Activated CD8-positive, alpha-beta memory T cell treated with anti-CD3 and anti-CD28 coated beads, Interleukin-2, amount 10 ng/mL, durations not matched to agents 7 days and 5 days (primary cell): ENCODE measurements at regions of chr20 and their contacts with region 1.

Region 1: DNA sequence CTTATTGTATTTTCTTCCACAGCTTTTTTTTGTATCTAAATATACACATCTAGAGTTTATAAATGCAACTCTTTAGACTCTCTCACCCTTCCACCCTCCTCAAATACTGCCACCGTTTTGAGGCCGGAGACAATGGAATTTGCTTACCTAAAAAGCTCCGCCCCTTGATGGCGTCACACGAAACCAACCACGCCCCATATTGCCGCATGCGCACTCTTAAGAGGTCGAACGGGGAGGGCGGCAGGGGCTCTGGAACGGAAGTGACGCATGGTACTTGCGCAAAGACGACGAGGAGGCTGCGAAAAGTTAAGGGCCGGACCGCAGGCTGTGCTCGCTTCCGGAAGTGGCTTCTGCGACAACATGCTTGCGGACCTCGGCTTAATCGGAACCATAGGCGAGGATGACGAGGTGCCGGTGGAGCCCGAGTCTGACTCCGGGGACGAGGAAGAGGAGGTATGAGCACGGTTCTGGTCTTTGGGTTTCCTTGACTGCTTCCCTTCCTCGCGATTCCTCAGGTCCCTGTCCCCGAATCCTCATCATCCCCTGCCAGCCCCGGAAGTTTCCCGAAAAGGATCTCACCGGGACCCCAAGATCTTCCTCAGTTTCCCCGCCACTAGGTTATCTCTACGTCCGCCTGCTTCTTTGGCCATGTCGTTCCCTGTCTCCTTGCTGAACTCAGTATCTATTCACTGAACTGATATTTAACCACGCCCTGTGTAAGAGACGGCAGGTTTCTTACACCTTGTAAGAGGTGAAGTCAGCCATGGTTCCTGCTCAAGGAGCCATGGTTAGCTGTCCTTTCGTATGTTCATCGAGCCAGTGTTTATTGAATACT is at the start of gene DDX27:
- DNase-seq: peak; percentile 99
- ATAC-seq: peak; percentile 94
- H3K4me3 Mint-ChIP-seq: peak within 1 kb of the TSS; percentile 89
- H3K27ac Mint-ChIP-seq: peak within 1 kb of the TSS; percentile 93
- H3K4me1 Mint-ChIP-seq: peaks cover 26% of the 10 kb centered on the region
- H3K27me3 Mint-ChIP-seq: no peaks in the 10 kb centered on the region
- total RNA-seq, gene DDX27: 40.5 to 52.7 TPM

Region 2: DNA sequence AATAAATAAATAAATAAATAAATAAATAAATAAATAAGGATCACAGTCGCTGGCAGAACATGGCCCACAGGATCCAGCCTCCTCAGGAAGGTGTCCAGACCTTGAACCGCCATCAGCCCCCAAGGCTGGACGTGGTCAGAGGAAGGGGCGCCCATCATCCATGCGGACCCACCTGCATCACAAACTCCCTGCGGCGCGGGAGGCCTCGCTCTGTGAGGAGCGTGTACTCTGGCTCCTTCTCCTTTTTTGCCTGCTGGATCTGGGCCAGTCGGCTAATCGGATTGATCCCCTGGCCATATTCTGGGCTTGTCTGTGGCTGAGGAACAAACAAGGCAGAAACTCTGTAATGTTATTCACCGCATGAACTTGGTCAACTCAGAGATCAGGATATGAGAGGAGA is 96.4 kb before region 1 on chr20:
- CTCF ChIA-PET with region 1: interaction called, 15 read pairs
- DNase-seq: no peak
- ATAC-seq: no peak
- H3K4me3 Mint-ChIP-seq: no peak overlapping the region
- H3K27ac Mint-ChIP-seq: no peak overlapping the region
- H3K4me1 Mint-ChIP-seq: peaks cover 2% of the 10 kb centered on the region
- H3K27me3 Mint-ChIP-seq: no peaks in the 10 kb centered on the region

Region 3: DNA sequence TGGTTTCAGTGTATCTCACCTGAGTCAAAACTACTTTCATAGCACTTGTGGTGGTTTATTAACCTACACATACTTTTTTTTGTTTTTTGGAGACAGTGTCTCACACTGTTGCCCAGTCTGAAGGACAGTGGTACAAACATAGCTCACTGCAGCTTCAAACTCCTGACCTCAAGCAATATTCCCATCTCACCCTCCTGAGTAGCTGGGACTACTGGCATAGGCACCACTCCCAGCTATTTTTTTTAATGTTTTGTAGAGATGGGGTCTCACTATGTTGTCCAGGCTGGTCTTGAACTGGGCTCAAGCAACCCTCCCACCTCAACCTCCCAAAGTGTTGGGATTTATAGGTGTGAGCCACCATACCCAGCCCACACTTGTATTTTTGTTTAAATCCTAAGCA is 80.9 kb before region 1 on chr20:
- CTCF ChIA-PET with region 1: interaction called, 161 read pairs
- DNase-seq: no peak
- ATAC-seq: no peak
- H3K4me3 Mint-ChIP-seq: no peak overlapping the region
- H3K27ac Mint-ChIP-seq: no peak overlapping the region
- H3K4me1 Mint-ChIP-seq: peaks cover 9% of the 10 kb centered on the region
- H3K27me3 Mint-ChIP-seq: no peaks in the 10 kb centered on the region

Region 4: GRCh38 chr20:49166534-49167449 is 52.5 kb before region 1 on chr20:
- CTCF ChIA-PET with region 1: interaction called, 27 read pairs
- DNase-seq: no peak
- ATAC-seq: peak; percentile 94
- H3K4me3 Mint-ChIP-seq: peak overlapping the region; percentile 58
- H3K27ac Mint-ChIP-seq: peak overlapping the region; percentile 87
- H3K4me1 Mint-ChIP-seq: peaks cover 49% of the 10 kb centered on the region
- H3K27me3 Mint-ChIP-seq: no peaks in the 10 kb centered on the region

Region 5: DNA sequence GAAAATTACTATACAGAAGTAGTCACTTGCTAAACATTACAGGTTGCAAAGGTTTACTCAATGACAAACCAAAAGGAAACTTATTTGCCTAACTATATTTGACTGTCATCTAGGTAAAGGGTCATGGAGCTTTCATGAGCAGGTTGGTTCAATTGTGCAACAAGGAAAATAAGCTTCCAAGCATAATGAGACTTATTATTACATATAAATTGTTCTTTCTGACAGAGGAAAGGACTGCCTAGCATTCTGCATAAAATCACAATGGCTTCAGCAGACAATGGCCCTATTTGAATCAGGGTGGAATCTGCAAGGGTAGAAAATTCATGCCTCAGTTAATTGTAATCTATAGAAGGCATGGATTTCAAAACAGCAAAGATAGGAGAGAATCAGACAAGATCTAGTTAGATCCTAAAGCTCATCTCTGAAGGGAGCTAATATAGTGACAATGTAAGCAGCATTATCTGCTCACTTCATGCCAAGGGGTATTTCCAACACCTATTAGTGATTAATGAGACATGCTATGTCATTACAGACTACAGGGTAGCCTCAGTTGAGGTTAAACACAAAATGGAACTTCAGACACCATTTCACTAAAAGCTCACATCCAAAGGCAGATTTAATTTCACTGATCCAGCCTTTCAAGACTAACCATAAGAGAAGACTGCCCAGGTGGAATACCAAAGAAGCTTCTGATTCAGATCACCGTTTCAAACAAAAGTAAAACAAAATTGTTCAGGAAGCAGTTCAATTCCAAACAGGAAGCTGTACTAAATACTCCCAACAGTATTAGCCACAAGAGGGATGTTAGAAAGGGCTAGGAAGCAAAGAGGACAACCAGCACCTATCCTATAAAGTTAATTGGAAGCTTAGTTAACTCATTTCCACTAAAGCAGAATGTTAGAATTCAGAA is 39.7 kb before region 1 on chr20:
- CTCF ChIA-PET with region 1: interaction called, 17 read pairs
- DNase-seq: no peak
- ATAC-seq: no peak
- H3K4me3 Mint-ChIP-seq: no peak overlapping the region
- H3K27ac Mint-ChIP-seq: no peak overlapping the region
- H3K4me1 Mint-ChIP-seq: peaks cover 42% of the 10 kb centered on the region
- H3K27me3 Mint-ChIP-seq: no peaks in the 10 kb centered on the region

Region 6: DNA sequence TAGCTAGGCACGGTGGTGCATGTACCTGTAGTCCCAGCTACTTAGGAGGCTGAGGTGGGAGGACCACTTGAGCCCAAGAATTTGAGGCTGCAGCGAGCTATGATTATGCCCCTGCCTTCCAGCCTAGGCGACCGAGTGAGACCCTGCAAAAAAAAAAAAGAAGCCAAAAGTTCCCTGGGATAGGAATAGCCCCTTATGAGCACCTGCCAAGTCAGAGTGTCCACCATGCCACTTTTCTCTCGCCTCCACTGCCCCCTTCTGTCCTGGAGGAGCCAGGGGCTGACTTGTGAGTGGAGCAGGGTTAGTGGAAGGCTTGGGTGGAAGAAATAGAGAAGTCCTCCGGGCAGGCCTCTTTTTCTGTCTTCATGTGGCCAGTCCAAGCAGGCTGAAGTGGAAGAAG is 12.2 kb before region 1 on chr20:
- CTCF ChIA-PET with region 1: interaction called, 20 read pairs
- DNase-seq: no peak
- ATAC-seq: no peak
- H3K4me3 Mint-ChIP-seq: no peak overlapping the region
- H3K27ac Mint-ChIP-seq: no peak overlapping the region
- H3K4me1 Mint-ChIP-seq: no peaks in the 10 kb centered on the region
- H3K27me3 Mint-ChIP-seq: peaks cover 2% of the 10 kb centered on the region

Region 7: DNA sequence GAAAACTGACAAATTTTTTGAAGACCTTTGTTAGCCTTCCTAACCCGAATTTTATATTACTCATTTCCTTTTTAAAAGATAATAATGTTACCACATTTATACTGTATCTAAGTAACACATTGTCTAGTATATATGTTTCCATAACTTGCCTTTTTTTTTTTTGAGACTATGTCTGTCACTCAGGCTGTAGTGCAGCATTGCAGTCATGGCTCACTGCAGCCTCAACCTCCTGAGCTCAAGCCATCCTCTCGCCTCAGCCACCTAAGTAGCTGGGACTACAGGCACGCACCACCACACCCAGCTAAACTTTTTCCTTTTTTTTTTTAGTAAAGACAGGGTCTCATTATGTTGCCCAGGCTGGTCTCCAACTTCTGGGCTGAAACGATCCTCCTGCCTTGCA is 40.0 kb after region 1 on chr20:
- CTCF ChIA-PET with region 1: no interaction called
- DNase-seq: no peak
- ATAC-seq: no peak
- H3K4me3 Mint-ChIP-seq: no peak overlapping the region
- H3K27ac Mint-ChIP-seq: no peak overlapping the region
- H3K4me1 Mint-ChIP-seq: peaks cover 18% of the 10 kb centered on the region
- H3K27me3 Mint-ChIP-seq: no peaks in the 10 kb centered on the region

Region 8: DNA sequence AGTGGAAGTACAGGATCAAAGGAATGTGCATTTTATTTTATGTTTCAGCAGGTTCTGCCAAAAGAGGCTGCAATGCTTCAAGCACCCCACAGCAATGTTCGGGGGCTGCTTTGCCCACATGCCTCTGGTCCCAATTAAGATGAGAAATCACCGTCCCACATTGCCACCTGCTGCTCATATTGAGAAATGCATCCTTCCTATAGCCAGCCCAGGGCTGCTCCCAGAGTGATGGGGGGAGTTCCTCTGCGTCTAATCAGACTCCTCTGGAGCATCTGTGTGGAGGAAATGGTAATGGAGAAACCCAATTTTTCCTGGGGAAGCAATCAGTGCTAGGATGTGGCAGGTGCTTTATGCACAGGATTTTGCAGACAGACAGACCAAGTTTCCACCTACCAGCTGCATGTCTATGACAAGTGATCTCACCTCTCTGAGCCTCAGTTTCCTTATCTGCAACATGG is 315.0 kb after region 1 on chr20:
- CTCF ChIA-PET with region 1: no interaction called
- DNase-seq: peak; percentile 84
- ATAC-seq: peak; percentile 71
- H3K4me3 Mint-ChIP-seq: peak overlapping the region; percentile 40
- H3K27ac Mint-ChIP-seq: peak overlapping the region; percentile 94
- H3K4me1 Mint-ChIP-seq: peaks cover 23% of the 10 kb centered on the region
- H3K27me3 Mint-ChIP-seq: peaks cover under 1% of the 10 kb centered on the region